Activated T-helper 1 cell treated with anti-CD3 and anti-CD28 coated beads, Interleukin-12 subunit alpha, Interleukin-12 subunit beta, Interleukin-2, Interleukin-4 antibody, amounts not matched to agents 30 ng/mL and 10 ng/mL and 1 ng/mL, durations not matched to agents 14 hours and 24 hours and 36 hours (primary cell): ENCODE measurements at regions of chr14 and their contacts with region 1.

Region 1: DNA sequence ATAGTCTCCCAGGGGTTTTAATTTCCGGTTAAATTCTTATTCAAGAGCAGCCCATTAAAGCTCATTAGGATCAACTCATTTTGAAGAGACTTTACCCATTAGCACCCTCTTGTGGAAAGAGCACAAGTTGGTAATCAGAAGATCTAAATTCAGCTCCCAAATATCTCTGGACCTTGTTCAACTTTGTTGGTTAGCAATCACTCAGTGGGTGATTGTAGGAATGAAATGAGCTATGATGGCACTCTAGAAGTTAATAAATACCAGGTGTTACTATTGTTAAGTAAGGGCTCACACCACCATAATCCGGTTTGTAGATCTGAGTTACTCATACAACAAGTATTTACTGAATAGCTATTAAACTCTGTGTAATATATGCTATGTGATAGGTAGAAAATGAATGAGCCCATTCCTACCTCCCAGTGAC is 42.9 kb downstream of the TRIP11 start:
- DNase-seq: no peak
- H3K4me3 Mint-ChIP-seq: no peak overlapping the region
- H3K27ac Mint-ChIP-seq: no peak overlapping the region
- H3K4me1 Mint-ChIP-seq: peaks cover 33% of the 10 kb centered on the region
- H3K27me3 Mint-ChIP-seq: no peaks in the 10 kb centered on the region

Region 2: DNA sequence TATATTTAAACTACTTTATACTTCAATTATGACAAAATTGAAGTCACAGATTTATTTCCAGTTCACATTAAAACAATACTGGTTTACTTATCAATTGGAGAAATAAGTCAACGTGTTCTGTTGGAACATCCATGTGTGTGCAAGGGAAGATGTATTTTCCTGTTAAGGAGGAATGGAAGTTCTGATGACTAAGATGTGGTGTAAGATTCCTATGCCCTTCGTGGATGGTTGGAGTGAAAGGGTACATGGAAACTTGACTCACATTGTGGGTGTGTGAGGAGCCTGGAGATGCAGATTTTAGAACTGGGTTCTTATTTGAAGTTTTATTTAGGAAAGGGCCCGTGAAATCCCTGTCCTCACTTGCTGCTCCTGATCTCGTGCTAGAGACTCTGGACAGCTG is 360.4 kb before region 1 on chr14:
- intact Hi-C with region 1: no loop called
- DNase-seq: no peak
- H3K4me3 Mint-ChIP-seq: no peak overlapping the region
- H3K27ac Mint-ChIP-seq: no peak overlapping the region
- H3K4me1 Mint-ChIP-seq: no peaks in the 10 kb centered on the region
- H3K27me3 Mint-ChIP-seq: no peaks in the 10 kb centered on the region

Region 3: DNA sequence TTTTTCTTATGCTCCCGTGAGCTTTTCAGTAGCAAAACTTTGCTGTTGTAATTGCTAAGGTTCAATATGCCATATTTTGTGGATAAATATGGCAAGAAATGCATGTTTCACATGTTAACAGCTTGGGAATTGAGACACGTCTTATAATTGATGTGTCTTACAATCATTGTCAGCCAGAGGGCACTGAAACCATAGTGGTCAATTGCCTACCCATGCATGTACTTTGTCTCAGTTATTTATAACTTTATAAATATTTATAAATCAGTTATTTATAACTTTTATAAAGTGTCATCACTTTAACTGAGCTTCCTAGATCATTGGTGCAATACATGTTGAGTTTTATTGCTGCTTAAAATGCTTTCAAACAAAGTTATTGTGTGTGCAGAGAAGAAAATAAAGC is 347.0 kb before region 1 on chr14:
- intact Hi-C with region 1: loop called (anchors 1 kb)
- DNase-seq: no peak
- H3K4me3 Mint-ChIP-seq: no peak overlapping the region
- H3K27ac Mint-ChIP-seq: no peak overlapping the region
- H3K4me1 Mint-ChIP-seq: peaks cover 5% of the 10 kb centered on the region
- H3K27me3 Mint-ChIP-seq: peaks cover 4% of the 10 kb centered on the region

Region 4: DNA sequence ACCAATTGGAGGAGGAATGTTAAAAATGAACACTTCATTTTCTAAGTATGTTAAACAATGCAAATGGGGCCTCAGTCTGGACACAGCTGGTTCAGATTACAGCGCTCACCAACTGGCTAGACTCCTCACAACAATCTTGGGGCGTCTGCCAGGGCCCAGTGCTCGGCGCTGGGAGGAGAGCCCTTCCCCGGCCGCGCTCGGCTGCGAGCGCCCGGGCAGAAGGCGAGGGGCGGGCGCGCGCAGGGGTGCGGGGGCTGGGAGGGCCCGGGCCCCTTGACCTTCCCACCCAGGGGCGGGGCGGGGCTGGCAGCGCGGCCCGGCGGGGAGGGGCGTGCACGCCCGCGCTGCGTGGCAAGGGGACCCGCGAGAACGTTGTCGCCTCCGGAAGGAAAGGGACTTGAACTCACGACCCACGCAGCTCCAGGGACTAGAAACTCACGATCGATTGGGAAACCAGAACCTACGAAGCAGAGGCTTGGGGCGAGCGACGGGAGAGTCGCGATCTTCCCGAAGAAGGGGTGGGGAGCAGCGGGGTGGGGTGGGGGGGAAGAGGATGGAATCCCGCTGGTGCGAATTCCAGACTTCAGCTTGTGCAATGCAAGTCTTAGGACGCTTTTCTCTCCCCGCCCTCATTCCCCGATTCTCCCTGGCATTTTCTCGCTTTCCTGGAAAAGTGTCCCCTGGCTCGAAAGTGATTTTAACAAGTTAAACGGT is 49.3 kb before region 1 on chr14 and contains the start of gene FBLN5:
- intact Hi-C with region 1: loop called (anchors 10 kb)
- DNase-seq: no peak
- H3K4me3 Mint-ChIP-seq: peak within 1 kb of the TSS; percentile 76
- H3K27ac Mint-ChIP-seq: no peak within 1 kb of the TSS
- H3K4me1 Mint-ChIP-seq: peaks cover 18% of the 10 kb centered on the region
- H3K27me3 Mint-ChIP-seq: peaks cover 36% of the 10 kb centered on the region
- total RNA-seq, gene FBLN5: 0.69 and 1.2 TPM in 2 replicates